ENCODE measurements at regions of chr1 and their contacts with region 1.

Region 1: GRCh38 chr1:24714859-24715520 is 30.3 kb upstream of the CLIC4 start:
- DNase-seq: peak; percentile 85
- H3K4me3 ChIP-seq: no peak overlapping the region
- H3K27ac ChIP-seq: peak overlapping the region; percentile 62
- H3K4me1 ChIP-seq: peaks cover 42% of the 10 kb centered on the region
- H3K27me3 ChIP-seq: no peaks in the 10 kb centered on the region
- CTCF ChIP-seq: no peak

Region 2: DNA sequence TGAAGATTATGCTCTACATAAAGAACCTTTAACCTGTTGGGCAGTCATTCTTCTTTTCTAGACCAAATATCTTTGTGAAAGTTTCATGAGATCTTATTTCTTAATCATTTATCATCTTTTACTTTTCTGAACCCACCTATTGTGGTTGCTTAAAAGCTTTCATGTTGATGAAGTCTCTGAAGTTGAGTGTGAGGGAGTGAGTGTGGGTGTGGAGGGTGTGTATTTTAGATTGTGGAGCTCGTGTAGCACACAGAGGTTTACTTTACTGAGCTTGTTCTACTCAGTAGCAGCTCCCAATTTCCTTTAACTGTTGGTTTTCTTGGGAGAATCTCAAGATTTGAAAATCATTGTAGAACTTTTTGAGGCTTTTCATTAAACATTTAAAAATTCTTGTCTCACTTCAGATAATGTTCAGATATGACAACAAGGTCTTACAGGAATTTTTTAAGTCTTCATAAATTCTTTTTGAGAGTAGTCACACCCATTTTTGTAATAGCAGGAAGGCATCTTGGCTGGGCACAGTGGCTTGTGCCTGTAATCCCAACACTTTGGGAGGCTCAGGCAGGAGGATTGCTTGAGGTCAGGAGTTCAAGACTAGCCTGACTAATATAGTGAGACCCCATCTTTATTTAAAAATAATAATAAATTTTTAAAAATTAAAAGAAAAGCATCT is 54.9 kb before region 1 on chr1:
- CTCF ChIA-PET with region 1: no interaction called
- dilution Hi-C with region 1: loop called (anchors 10 kb)
- in situ Hi-C with region 1: no loop called
- intact Hi-C with region 1: no loop called
- DNase-seq: no peak
- H3K4me3 ChIP-seq: no peak overlapping the region
- H3K27ac ChIP-seq: no peak overlapping the region
- H3K4me1 ChIP-seq: peaks cover 4% of the 10 kb centered on the region
- H3K27me3 ChIP-seq: no peaks in the 10 kb centered on the region
- CTCF ChIP-seq: no peak

Region 3: GRCh38 chr1:24727501-24728216 is 12.7 kb after region 1 on chr1:
- CTCF ChIA-PET with region 1: interaction called, 18 read pairs
- dilution Hi-C with region 1: no loop called
- in situ Hi-C with region 1: no loop called
- intact Hi-C with region 1: no loop called
- DNase-seq: peak; percentile 67
- H3K4me3 ChIP-seq: no peak overlapping the region
- H3K27ac ChIP-seq: no peak overlapping the region
- H3K4me1 ChIP-seq: peaks cover 20% of the 10 kb centered on the region
- H3K27me3 ChIP-seq: no peaks in the 10 kb centered on the region
- CTCF ChIP-seq: no peak

Region 4: GRCh38 chr1:24769656-24770651 is 55.0 kb after region 1 on chr1:
- CTCF ChIA-PET with region 1: interaction called, 11 read pairs
- dilution Hi-C with region 1: no loop called
- in situ Hi-C with region 1: no loop called
- intact Hi-C with region 1: no loop called
- DNase-seq: peak; percentile 84
- H3K4me3 ChIP-seq: no peak overlapping the region
- H3K27ac ChIP-seq: peak overlapping the region; percentile 68
- H3K4me1 ChIP-seq: peaks cover 25% of the 10 kb centered on the region
- H3K27me3 ChIP-seq: no peaks in the 10 kb centered on the region
- CTCF ChIP-seq: no peak

Region 5: GRCh38 chr1:24905355-24905978 is 190.5 kb after region 1 on chr1:
- CTCF ChIA-PET with region 1: no interaction called
- dilution Hi-C with region 1: no loop called
- in situ Hi-C with region 1: no loop called
- intact Hi-C with region 1: no loop called
- DNase-seq: no peak
- H3K4me3 ChIP-seq: no peak overlapping the region
- H3K27ac ChIP-seq: no peak overlapping the region
- H3K4me1 ChIP-seq: no peaks in the 10 kb centered on the region
- H3K27me3 ChIP-seq: no peaks in the 10 kb centered on the region
- CTCF ChIP-seq: no peak